B cell (primary cell): ENCODE measurements at regions of chr1 and their contacts with region 1.

Region 1: DNA sequence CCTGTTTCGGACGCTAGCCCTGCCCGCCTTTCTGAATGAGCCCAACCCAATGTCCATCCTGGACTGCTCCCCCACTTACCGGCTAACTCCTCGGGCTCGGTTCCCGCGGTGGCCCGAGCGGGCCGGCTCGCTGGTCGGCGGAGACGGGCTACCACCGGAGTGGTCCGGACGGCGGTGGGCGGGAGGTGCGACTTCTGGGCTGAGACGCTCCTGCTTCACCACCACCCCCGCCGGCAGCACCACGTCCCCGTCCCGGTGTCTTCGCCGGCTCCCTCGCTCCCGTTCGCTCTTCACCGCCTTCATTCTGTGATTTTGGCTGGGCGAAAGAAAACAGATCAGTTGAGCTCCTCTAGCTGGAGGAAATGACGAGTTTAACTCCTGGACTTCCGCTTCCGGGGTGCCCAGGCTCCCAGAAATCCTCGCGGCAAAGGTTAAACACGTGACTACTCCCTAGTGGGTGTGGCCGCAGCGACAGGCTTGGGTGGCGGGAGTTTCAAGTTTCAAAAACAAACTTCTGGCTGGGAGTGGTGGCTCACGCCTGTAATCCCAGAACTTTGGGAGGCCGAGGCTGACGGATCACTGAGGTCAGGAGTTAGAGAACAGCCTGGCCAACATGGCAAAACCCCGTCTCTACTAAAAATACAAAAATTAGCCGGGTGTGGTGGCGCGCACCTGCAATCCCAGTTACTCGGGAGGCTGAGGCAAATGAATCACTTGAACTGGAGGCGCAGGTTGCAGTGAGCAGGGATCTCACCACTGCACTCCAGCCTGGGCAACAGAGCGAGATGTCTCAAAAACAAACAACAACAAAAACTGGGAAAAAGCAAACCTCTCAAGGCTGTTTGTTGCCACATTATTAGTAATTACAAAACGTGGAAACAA is at the start of gene SNIP1:
- DNase-seq: peak; percentile 94
- ATAC-seq: peak; percentile 98
- H3K4me3 ChIP-seq: peak within 1 kb of the TSS; percentile 75 to 99 (median 93)
- H3K4me3 Mint-ChIP-seq: peak within 1 kb of the TSS; percentile 98
- H3K27ac ChIP-seq: peak within 1 kb of the TSS; percentile 82 to 96
- H3K27ac Mint-ChIP-seq: peak within 1 kb of the TSS; percentile 97
- H3K4me1 ChIP-seq: peaks cover 13 to 19% of the 10 kb centered on the region in 2 donors
- H3K4me1 Mint-ChIP-seq: peaks cover 33% of the 10 kb centered on the region
- H3K27me3 ChIP-seq: peaks cover 0 to 3% (median 0%) of the 10 kb centered on the region in 4 experiments
- H3K27me3 Mint-ChIP-seq: peaks cover 5% of the 10 kb centered on the region
- CTCF ChIP-seq: no peak
- total RNA-seq, gene SNIP1: 45.0 and 45.1 TPM in 2 replicates

Region 2: GRCh38 chr1:37595440-37596319 is 41.5 kb after region 1 on chr1 and contains the start of gene GNL2:
- CTCF ChIA-PET with region 1: no interaction called
- POLR2A ChIA-PET with region 1: interaction called, 4 read pairs
- intact Hi-C with region 1: loop called (anchors 1 kb)
- DNase-seq: peak; percentile 99
- ATAC-seq: peak; percentile 98
- H3K4me3 ChIP-seq: peak within 1 kb of the TSS; percentile 67 to 96 (median 92)
- H3K4me3 Mint-ChIP-seq: peak within 1 kb of the TSS; percentile 99
- H3K27ac ChIP-seq: peak within 1 kb of the TSS; percentile 77 to 90
- H3K27ac Mint-ChIP-seq: peak within 1 kb of the TSS; percentile 93
- H3K4me1 ChIP-seq: peaks cover 16 to 20% of the 10 kb centered on the region in 2 donors
- H3K4me1 Mint-ChIP-seq: peaks cover 26% of the 10 kb centered on the region
- H3K27me3 ChIP-seq: peaks cover 0 to 3% (median 0%) of the 10 kb centered on the region in 4 experiments
- H3K27me3 Mint-ChIP-seq: no peaks in the 10 kb centered on the region
- CTCF ChIP-seq: no peak
- total RNA-seq, gene GNL2: 44.0 and 50.6 TPM in 2 replicates

Region 3: GRCh38 chr1:37667023-37667761 is 113.0 kb after region 1 on chr1:
- CTCF ChIA-PET with region 1: no interaction called
- POLR2A ChIA-PET with region 1: no interaction called
- intact Hi-C with region 1: no loop called
- DNase-seq: no peak
- ATAC-seq: no peak
- H3K4me3 ChIP-seq: no peak overlapping the region
- H3K4me3 Mint-ChIP-seq: no peak overlapping the region
- H3K27ac ChIP-seq: no peak overlapping the region
- H3K27ac Mint-ChIP-seq: no peak overlapping the region
- H3K4me1 ChIP-seq: no peaks in the 10 kb centered on the region
- H3K4me1 Mint-ChIP-seq: no peaks in the 10 kb centered on the region
- H3K27me3 ChIP-seq: peaks cover 0 to 12% (median 0%) of the 10 kb centered on the region in 4 experiments
- H3K27me3 Mint-ChIP-seq: peaks cover 9% of the 10 kb centered on the region
- CTCF ChIP-seq: no peak